ENCODE measurements at regions of chr1 and their contacts with region 1.

Region 1: GRCh38 chr1:25616095-25616986 is at the start of gene MAN1C1:
- DNase-seq: peak; percentile 73
- H3K4me3 ChIP-seq: peak within 1 kb of the TSS; percentile 33 to 56 (median 50)
- H3K27ac ChIP-seq: no peak within 1 kb of the TSS
- H3K4me1 ChIP-seq: peaks cover 18% of the 10 kb centered on the region
- H3K27me3 ChIP-seq: peaks cover 27% of the 10 kb centered on the region
- CTCF ChIP-seq: peak in 1 of 2 donors; percentile 36
- total RNA-seq, gene MAN1C1: 0.07 to 0.33 TPM

Region 2: GRCh38 chr1:25543425-25544242 is 72.7 kb before region 1 on chr1 and contains the start of gene LDLRAP1:
- CTCF ChIA-PET with region 1: no interaction called
- dilution Hi-C with region 1: no loop called
- in situ Hi-C with region 1: no loop called
- intact Hi-C with region 1: loop called (anchors 2 kb)
- DNase-seq: peak; percentile 70
- H3K4me3 ChIP-seq: peak within 1 kb of the TSS; percentile 74 to 86 (median 84)
- H3K27ac ChIP-seq: peak within 1 kb of the TSS; percentile 3
- H3K4me1 ChIP-seq: peaks cover 8% of the 10 kb centered on the region
- H3K27me3 ChIP-seq: no peaks in the 10 kb centered on the region
- CTCF ChIP-seq: no peak
- total RNA-seq, gene LDLRAP1: 23.0 to 32.7 TPM

Region 3: GRCh38 chr1:25562101-25562927 is 54.0 kb before region 1 on chr1:
- CTCF ChIA-PET with region 1: no interaction called
- dilution Hi-C with region 1: no loop called
- in situ Hi-C with region 1: no loop called
- intact Hi-C with region 1: no loop called
- DNase-seq: no peak
- H3K4me3 ChIP-seq: no peak overlapping the region
- H3K27ac ChIP-seq: no peak overlapping the region
- H3K4me1 ChIP-seq: peaks cover 52% of the 10 kb centered on the region
- H3K27me3 ChIP-seq: no peaks in the 10 kb centered on the region
- CTCF ChIP-seq: no peak

Region 4: DNA sequence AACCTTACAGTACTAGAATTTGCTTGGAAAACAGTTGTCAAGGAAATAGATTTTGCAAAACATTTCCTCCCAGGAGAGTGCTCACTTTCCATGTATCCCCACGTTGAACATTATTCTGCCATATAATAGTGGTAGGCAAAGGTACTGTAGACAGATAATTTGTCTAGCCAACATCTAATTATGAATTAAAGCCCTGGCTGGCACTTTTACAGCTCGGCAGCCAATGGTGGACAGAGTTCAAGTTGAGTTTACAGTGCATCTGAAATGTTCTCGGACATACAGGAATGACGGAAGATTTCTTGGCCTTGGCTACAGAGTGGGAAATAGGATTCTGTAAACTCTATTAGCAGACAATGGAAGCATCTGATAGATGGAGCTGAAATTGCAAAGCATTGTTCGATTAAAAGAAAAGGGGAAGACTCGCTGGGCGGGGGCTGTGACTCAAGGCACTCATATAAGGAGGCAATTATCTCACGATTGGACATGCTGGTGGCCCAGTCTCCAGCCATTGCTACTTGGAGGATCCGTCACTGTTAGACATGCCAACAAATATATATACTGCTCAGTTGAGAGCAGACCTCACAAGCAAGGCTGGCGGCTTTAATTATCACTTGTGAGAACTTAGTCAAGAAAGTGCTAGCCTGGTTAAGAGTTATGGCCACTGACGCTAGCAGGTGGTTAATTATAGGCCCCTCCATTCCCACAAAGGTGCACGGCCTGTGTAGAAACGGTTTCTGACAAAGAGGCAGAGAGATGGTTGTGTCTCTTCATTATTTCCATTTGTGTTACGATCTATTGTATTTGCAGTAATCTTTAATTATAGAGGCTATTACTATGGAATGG is 48.2 kb after region 1 on chr1:
- CTCF ChIA-PET with region 1: no interaction called
- dilution Hi-C with region 1: no loop called
- in situ Hi-C with region 1: no loop called
- intact Hi-C with region 1: no loop called
- DNase-seq: no peak
- H3K4me3 ChIP-seq: no peak overlapping the region
- H3K27ac ChIP-seq: no peak overlapping the region
- H3K4me1 ChIP-seq: no peaks in the 10 kb centered on the region
- H3K27me3 ChIP-seq: no peaks in the 10 kb centered on the region
- CTCF ChIP-seq: no peak